ENCODE measurements at regions of chr4 and their contacts with region 1.

Region 1: GRCh38 chr4:1249148-1249730 is 309 bp upstream of the CTBP1 start:
- DNase-seq: peak in 1 of 2 donors; percentile 90
- H3K4me3 ChIP-seq: peak overlapping the region; percentile 78 to 95
- H3K27ac ChIP-seq: peak overlapping the region; percentile 90 to 95
- H3K4me1 ChIP-seq: peaks cover 25 to 40% of the 10 kb centered on the region in 2 donors
- H3K27me3 ChIP-seq: no peaks in the 10 kb centered on the region
- CTCF ChIP-seq: no peak

Region 2: GRCh38 chr4:1130316-1131186 is 118.7 kb before region 1 on chr4:
- intact Hi-C with region 1: loop called (anchors 2 kb)
- DNase-seq: peak in 1 of 2 donors; percentile 79
- H3K4me3 ChIP-seq: no peak overlapping the region
- H3K27ac ChIP-seq: no peak overlapping the region
- H3K4me1 ChIP-seq: no peaks in the 10 kb centered on the region
- H3K27me3 ChIP-seq: no peaks in the 10 kb centered on the region
- CTCF ChIP-seq: peak; percentile 92 to 100 (median 98)

Region 3: DNA sequence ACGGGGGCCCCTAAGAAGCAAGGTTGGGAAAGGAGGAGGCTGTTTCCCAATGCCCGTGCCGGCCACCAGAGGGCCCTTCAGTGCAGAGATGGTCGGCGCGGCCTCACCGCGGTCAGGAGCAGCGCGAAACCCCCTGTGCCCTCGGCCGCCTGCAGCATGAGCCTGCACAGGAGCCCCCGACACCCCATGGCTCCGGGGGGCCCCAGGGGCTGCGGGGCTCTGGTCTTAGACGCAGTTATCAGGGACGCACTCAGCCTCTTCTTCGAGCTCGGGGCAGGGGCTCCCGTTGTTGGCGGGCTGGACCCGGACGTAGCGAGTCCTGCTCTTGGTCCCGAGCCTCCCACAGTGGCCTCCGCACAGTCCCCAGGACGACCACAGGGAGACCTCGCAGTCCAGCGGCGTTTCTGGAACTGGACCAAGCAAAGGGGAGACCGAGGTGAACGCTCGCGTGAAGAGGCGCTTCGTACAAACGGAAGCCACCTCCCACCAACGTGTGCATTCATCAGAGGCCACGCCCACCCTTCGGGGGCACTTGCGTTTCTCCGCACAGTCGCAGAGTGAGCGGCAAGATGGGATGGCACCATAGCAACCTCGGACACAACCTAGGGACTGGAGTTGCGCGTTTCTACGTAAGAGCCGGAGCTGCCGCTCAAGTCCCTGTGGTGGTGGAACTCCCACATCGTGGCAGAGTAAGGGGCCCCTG is 81.8 kb before region 1 on chr4:
- intact Hi-C with region 1: loop called (anchors 1 kb)
- DNase-seq: peak in 1 of 2 donors; percentile 89
- H3K4me3 ChIP-seq: peak overlapping the region; percentile 72 to 91
- H3K27ac ChIP-seq: no peak overlapping the region
- H3K4me1 ChIP-seq: peaks cover 8 to 22% of the 10 kb centered on the region in 2 donors
- H3K27me3 ChIP-seq: peaks cover 20% of the 10 kb centered on the region
- CTCF ChIP-seq: peak; percentile 76 to 89 (median 85)

Region 4: GRCh38 chr4:1207603-1208265 is 41.5 kb before region 1 on chr4:
- intact Hi-C with region 1: loop called (anchors 5 kb)
- DNase-seq: peak in 1 of 2 donors; percentile 67
- H3K4me3 ChIP-seq: no peak overlapping the region
- H3K27ac ChIP-seq: no peak overlapping the region
- H3K4me1 ChIP-seq: peaks cover 25 to 31% of the 10 kb centered on the region in 2 donors
- H3K27me3 ChIP-seq: no peaks in the 10 kb centered on the region
- CTCF ChIP-seq: no peak

Region 5: GRCh38 chr4:1579901-1580691 is 330.9 kb after region 1 on chr4:
- intact Hi-C with region 1: loop called (anchors 2 kb)
- DNase-seq: peak; percentile 72 to 95
- H3K4me3 ChIP-seq: peak overlapping the region; percentile 58 to 95
- H3K27ac ChIP-seq: peak overlapping the region; percentile 63 to 74
- H3K4me1 ChIP-seq: peaks cover 4% of the 10 kb centered on the region in 2 donors
- H3K27me3 ChIP-seq: no peaks in the 10 kb centered on the region
- CTCF ChIP-seq: no peak

Region 6: GRCh38 chr4:1856042-1856788 is 607.0 kb after region 1 on chr4 and contains the start of gene LETM1:
- intact Hi-C with region 1: loop called (anchors 5 kb)
- DNase-seq: peak; percentile 86 to 97
- H3K4me3 ChIP-seq: peak within 1 kb of the TSS; percentile 85 to 86
- H3K27ac ChIP-seq: peak within 1 kb of the TSS; percentile 78 to 82
- H3K4me1 ChIP-seq: peaks cover 0 to 10% of the 10 kb centered on the region in 2 donors
- H3K27me3 ChIP-seq: no peaks in the 10 kb centered on the region
- CTCF ChIP-seq: peak in 1 of 3 experiments; percentile 28
- total RNA-seq, gene LETM1: 37.7 TPM